Activated naive CD4-positive, alpha-beta T cell treated with anti-CD3 and anti-CD28 coated beads for 36 hours (primary cell): ENCODE measurements at regions of chr22 and their contacts with region 1.

Region 1: GRCh38 chr22:24270638-24271408 is at the start of gene SPECC1L:
- DNase-seq: peak; percentile 91
- H3K4me3 Mint-ChIP-seq: peak within 1 kb of the TSS; percentile 89
- H3K27ac Mint-ChIP-seq: peak within 1 kb of the TSS; percentile 87
- H3K4me1 Mint-ChIP-seq: peaks cover 36% of the 10 kb centered on the region
- H3K27me3 Mint-ChIP-seq: no peaks in the 10 kb centered on the region
- total RNA-seq, gene SPECC1L: 33.5 to 35.7 TPM

Region 2: GRCh38 chr22:24284747-24285203 is 14.0 kb after region 1 on chr22:
- CTCF ChIA-PET with region 1: interaction called, 14 read pairs
- intact Hi-C with region 1: loop called (anchors 1 kb)
- DNase-seq: peak; percentile 41
- H3K4me3 Mint-ChIP-seq: peak overlapping the region; percentile 0
- H3K27ac Mint-ChIP-seq: peak overlapping the region; percentile 79
- H3K4me1 Mint-ChIP-seq: peaks cover 51% of the 10 kb centered on the region
- H3K27me3 Mint-ChIP-seq: no peaks in the 10 kb centered on the region

Region 3: DNA sequence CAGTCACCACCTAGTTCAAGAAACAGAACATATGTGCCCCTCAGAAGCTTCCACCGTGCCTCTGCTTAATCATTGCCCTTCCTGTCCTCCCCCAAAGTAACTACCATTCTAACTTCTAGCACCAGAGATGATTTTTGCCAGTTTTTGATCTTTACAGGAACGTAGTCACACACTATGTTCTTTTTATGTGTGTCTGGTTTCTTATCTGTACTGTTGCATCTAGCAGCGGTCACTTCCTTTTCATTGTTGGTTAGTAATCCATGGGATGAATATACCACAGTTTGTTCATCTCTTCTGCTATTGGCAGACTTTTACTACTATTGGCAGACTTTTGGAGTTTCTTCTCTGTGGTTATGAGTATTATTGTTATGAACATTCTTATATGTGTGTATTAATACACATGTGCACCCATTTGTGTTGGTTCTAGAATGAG is 34.5 kb after region 1 on chr22:
- CTCF ChIA-PET with region 1: no interaction called
- intact Hi-C with region 1: loop called (anchors 2 kb)
- DNase-seq: peak; percentile 33
- H3K4me3 Mint-ChIP-seq: no peak overlapping the region
- H3K27ac Mint-ChIP-seq: peak overlapping the region; percentile 1
- H3K4me1 Mint-ChIP-seq: peaks cover 55% of the 10 kb centered on the region
- H3K27me3 Mint-ChIP-seq: no peaks in the 10 kb centered on the region

Region 4: GRCh38 chr22:24466716-24467328 is 196.0 kb after region 1 on chr22:
- CTCF ChIA-PET with region 1: no interaction called
- intact Hi-C with region 1: no loop called
- DNase-seq: no peak
- H3K4me3 Mint-ChIP-seq: no peak overlapping the region
- H3K27ac Mint-ChIP-seq: no peak overlapping the region
- H3K4me1 Mint-ChIP-seq: peaks cover 6% of the 10 kb centered on the region
- H3K27me3 Mint-ChIP-seq: no peaks in the 10 kb centered on the region

Region 5: GRCh38 chr22:24503137-24503842 is 232.5 kb after region 1 on chr22:
- CTCF ChIA-PET with region 1: no interaction called
- intact Hi-C with region 1: loop called (anchors 5 kb)
- DNase-seq: peak; percentile 87
- H3K4me3 Mint-ChIP-seq: no peak overlapping the region
- H3K27ac Mint-ChIP-seq: no peak overlapping the region
- H3K4me1 Mint-ChIP-seq: peaks cover 7% of the 10 kb centered on the region
- H3K27me3 Mint-ChIP-seq: no peaks in the 10 kb centered on the region